HepG2 (cell line): ENCODE measurements at regions of chr7 and their contacts with region 1.

Region 1: DNA sequence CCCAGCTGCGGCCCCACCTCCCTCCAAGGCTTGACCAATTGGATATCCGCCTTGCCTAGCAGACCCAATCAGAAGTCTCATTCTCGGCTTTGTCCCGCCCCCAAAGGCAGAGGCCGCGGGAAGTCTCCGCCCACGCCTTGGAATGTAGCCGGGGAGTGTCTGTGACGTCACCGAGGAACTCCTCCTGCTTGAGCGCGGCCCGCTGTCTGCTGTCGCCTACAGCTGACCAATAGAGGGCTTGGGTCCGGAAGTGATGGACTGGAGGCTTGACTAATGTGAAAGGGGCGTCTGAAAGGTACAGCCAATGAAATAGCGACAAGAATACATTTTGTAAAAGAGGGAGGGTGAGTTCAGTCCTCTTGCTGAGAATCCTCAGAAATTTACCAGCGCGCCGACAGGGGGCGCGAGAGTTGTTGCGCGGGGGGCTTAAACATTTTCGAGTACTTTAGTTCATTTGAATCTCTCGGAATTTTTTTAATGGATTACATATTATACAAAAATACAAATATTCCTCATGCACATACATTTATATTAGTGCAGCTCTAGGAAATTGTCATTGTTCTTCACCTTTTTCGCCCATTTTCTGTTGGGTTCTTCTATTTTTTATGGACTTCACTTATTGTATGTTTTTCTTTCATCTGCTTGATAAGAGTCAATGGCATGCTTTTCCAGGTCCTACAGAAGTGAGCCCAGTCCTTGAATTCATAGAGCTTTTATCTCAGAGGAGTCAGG is 376 bp upstream of the CREB3L2 start:
- DNase-seq: peak; percentile 99
- ATAC-seq: peak; percentile 94
- H3K4me3 ChIP-seq: peak overlapping the region; percentile 92 to 99 (median 98); a peak in 5 of 6 replicates
- H3K27ac ChIP-seq: peak overlapping the region; percentile 79
- H3K4me1 ChIP-seq: peaks cover 35% of the 10 kb centered on the region
- H3K27me3 ChIP-seq: no peaks in the 10 kb centered on the region; a peak in 1 of 5 replicates
- CTCF ChIP-seq: peak; percentile 73
- EP300 ChIP-seq: peak in 1 of 2 experiments; percentile 39; a peak in 2 of 4 replicates
- POLR2A ChIP-seq: no peak
- RAD21 ChIP-seq: peak; percentile 56; the same call in 1 of the 2 replicates

Region 2: GRCh38 chr7:137940656-137941518 is 61.4 kb before region 1 on chr7:
- CTCF ChIA-PET with region 1: interaction called, 3 read pairs
- POLR2A ChIA-PET with region 1: interaction called, 3 read pairs
- in situ Hi-C with region 1: no loop called
- intact Hi-C with region 1: loop called (anchors 2 kb)
- DNase-seq: peak; percentile 74
- ATAC-seq: peak; percentile 73
- H3K4me3 ChIP-seq: no peak overlapping the region
- H3K27ac ChIP-seq: peak overlapping the region; percentile 12
- H3K4me1 ChIP-seq: peaks cover 98% of the 10 kb centered on the region
- H3K27me3 ChIP-seq: no peaks in the 10 kb centered on the region
- CTCF ChIP-seq: 0 out of 2 replicates have a peak, but pooled peaks have one; percentile 4
- EP300 ChIP-seq: peak in 1 of 2 experiments; percentile 59; a peak in 2 of 4 replicates
- POLR2A ChIP-seq: no peak
- RAD21 ChIP-seq: no peak

Region 3: GRCh38 chr7:137953665-137954470 is 48.4 kb before region 1 on chr7:
- CTCF ChIA-PET with region 1: no interaction called
- POLR2A ChIA-PET with region 1: interaction called, 10 read pairs
- in situ Hi-C with region 1: no loop called
- intact Hi-C with region 1: no loop called
- DNase-seq: no peak
- ATAC-seq: peak; percentile 14; the same call in 2 of the 3 replicates
- H3K4me3 ChIP-seq: no peak overlapping the region
- H3K27ac ChIP-seq: peak overlapping the region; percentile 20
- H3K4me1 ChIP-seq: peaks cover 100% of the 10 kb centered on the region
- H3K27me3 ChIP-seq: no peaks in the 10 kb centered on the region
- CTCF ChIP-seq: no peak
- EP300 ChIP-seq: no peak
- POLR2A ChIP-seq: no peak
- RAD21 ChIP-seq: no peak

Region 4: DNA sequence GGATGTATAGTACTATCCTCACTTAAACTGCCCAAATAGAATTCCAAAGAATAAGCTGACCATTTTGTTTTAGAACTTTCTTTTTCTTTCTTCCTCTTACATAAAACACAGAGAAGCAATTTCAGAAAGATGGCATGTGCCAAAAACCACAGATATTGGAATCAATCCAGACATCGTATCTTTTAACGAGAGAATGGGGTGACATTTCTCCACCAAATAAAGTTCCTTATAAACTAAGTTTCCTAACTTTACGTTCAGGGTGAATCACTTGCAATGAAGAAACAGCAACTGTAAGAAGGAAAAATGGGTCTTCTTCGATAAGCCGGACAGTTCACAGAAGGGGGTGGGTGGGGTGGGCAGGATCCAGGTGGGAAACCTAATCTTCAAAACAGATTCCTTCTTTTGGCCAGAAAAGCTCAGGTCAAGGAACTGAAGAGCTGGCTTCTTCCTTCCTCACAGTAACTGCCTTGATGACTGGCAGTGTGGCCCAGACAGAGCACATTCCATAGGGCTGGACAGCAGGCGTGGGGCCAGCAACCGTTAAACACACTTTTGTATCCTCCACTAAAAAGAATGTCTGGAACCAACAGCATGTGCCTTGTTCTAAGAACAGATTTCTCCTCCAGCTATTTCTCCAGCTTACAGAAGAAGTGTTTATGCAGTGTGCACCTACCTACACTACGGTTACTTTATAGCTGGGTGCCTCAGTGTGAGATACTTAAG is 31.8 kb before region 1 on chr7:
- CTCF ChIA-PET with region 1: no interaction called
- POLR2A ChIA-PET with region 1: interaction called, 6 read pairs
- in situ Hi-C with region 1: no loop called
- intact Hi-C with region 1: loop called (anchors 2 kb)
- DNase-seq: no peak
- ATAC-seq: no peak
- H3K4me3 ChIP-seq: no peak overlapping the region
- H3K27ac ChIP-seq: peak overlapping the region; percentile 57
- H3K4me1 ChIP-seq: peaks cover 100% of the 10 kb centered on the region
- H3K27me3 ChIP-seq: no peaks in the 10 kb centered on the region
- CTCF ChIP-seq: no peak
- EP300 ChIP-seq: no peak
- POLR2A ChIP-seq: no peak
- RAD21 ChIP-seq: no peak

Region 5: DNA sequence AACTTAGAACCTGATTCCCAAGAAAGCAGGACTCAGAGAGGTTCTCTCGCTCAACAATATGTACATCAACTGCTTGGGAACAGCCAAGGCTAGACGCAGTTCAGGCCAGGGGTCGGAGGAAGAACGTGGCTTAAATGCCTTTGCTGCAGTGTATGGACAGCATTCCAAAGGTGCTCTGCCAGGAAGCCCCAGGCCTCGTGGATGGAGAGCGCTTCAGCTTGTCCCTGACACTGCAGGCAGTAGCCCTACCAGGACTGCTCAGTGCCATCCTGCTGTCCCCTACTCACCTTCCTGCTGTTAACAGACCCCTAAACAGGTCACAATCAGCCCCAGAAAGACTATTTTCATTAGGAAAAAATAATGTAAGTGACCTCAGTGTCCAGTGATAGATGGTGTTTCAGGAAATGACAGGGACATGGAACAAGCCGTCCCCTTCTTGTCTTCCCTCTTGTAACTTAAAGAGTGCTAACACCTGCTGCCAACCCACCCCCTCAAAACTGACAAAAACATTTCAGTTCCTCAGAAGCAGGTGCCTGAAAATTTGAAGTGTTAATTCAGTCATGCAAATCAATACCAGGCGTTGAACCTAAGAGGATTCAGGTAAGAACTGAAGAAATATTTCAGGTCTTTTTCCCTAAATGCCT is 16.9 kb before region 1 on chr7:
- CTCF ChIA-PET with region 1: no interaction called
- POLR2A ChIA-PET with region 1: interaction called, 14 read pairs
- in situ Hi-C with region 1: no loop called
- intact Hi-C with region 1: no loop called
- DNase-seq: peak; percentile 32
- ATAC-seq: peak; percentile 75
- H3K4me3 ChIP-seq: no peak overlapping the region; a peak in 1 of 6 replicates
- H3K27ac ChIP-seq: peak overlapping the region; percentile 59
- H3K4me1 ChIP-seq: peaks cover 100% of the 10 kb centered on the region
- H3K27me3 ChIP-seq: no peaks in the 10 kb centered on the region
- CTCF ChIP-seq: no peak
- EP300 ChIP-seq: no peak
- POLR2A ChIP-seq: no peak
- RAD21 ChIP-seq: no peak